ENCODE measurements at regions of chr1 and their contacts with region 1.

Region 1: DNA sequence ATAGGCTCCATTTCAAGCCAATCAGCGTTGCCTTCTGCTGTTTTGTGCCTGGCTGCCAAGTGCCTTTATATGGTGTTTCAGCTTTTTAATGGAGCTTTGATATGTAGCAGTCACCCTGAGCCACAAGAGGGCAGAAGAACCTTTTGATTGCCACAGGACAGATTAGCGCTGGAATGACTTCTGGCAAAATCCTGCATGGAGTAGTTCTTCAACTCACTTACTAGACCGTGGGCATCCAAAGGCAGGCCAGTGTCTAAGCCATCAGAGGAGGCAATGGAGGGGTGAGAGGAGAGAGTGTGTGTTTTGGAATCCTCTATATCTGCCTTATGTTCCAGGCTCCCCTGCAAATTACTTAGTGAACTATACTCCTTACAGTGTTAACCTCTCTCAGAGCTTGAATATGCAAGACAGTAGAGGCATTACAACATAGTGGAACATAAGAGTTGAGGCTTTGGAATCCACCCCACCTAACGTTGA is 56.2 kb downstream of the ST3GAL3 start:
- DNase-seq: peak in 41 of 42 donors; percentile 36 to 91 (median 80)

Region 2: DNA sequence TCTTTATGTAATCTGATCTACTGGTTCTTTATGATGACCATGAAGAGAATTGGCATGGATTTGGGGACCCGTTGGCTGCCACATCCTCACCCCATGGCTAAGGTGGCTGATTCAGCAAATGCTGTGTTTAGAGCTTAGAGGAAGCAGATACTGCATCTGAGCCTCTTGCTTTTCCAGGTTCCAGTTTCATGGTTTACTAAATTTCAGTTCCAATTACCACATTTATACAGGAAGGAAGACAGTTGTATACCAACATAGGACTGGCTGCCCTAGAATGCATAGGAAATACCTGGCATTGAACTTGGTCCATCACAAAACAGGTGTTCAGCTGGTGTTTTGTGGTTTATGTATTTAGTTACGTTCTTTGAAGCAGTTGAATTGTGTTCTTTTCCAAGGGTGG is 50.9 kb after region 1 on chr1:
- intact Hi-C with region 1: no loop called
- DNase-seq: no peak

Region 3: DNA sequence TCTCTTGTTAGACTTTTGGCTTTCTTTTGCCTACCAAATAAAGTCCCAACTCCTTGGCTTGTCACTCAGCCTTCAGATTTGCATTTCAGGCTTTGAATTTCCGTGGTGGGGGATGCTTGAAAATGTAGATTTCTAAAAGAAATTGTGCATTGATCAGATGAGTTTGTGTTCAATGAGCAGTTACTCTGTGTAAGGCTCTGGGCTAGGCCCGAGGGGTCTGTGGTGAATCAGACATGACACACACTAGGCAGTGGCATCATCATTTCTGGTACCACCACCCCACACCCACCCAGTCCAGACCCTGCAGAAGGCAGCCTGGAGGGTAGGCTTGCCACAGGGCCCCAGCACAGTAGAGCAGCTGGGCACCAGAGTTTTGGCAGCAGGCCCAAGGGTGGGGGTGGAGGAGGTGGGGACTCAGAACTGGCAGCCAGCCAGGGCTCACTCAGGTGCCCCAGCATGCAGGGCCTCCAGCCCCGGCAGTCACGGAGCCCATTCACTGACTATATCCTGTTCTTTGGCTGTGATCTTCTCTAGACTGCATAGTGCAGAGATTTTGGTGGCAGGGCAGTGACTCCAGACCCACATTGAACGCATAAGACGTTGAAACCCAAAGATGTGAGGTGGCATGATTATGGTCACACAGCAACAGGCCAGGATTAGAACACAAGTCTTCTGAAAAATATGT is 72.9 kb after region 1 on chr1:
- intact Hi-C with region 1: no loop called
- DNase-seq: peak in 23 of 42 donors; percentile 19 to 60 (median 36)

Region 4: GRCh38 chr1:43934101-43934985 is 170.8 kb after region 1 on chr1:
- intact Hi-C with region 1: loop called (anchors 5 kb)
- DNase-seq: peak in 40 of 42 donors; percentile 46 to 89 (median 70)